Spleen (tissue), 13 donors: ENCODE measurements at regions of chr10 and their contacts with region 1.

Region 1: GRCh38 chr10:103712570-103713498 is 142.5 kb downstream of the SH3PXD2A start:
- DNase-seq: peak; percentile 85
- H3K4me3 ChIP-seq: no peak overlapping the region
- H3K27ac ChIP-seq: no peak overlapping the region
- H3K4me1 ChIP-seq: peaks cover 0 to 12% (median 0%) of the 10 kb centered on the region in 6 donors
- H3K27me3 ChIP-seq: no peaks in the 10 kb centered on the region
- CTCF ChIP-seq: peak; percentile 85 to 96 (median 94)
- POLR2A ChIP-seq: no peak

Region 2: DNA sequence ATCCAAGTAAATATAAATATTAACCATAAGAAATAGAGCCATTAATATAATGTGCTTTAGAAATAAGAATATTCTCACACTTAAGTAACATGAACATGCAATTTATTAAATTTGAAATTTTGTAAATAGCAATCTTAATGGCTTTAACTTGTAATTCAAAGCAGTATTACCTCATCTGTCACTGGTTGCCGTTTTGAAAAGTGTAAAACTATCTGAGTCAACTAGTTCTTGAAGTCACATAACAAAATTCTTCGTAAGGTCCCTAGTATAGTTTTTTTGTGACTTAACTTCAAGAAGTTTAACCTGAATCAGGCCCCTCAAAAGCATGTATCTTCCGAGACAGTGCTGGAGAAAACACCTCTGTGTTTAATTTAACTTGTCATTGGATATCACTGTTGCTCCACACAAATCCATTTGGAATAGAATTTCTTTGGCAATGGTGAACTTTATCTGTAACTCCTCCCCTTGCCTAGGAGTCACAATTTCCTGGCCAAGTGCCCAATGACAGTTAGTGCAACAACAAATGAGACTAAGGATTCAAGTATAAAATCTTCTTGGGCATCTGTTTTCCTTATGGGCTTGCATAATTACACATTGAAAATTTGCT is 566.9 kb before region 1 on chr10:
- intact Hi-C with region 1: no loop called
- DNase-seq: no peak
- H3K4me3 ChIP-seq: no peak overlapping the region
- H3K27ac ChIP-seq: no peak overlapping the region
- H3K4me1 ChIP-seq: peaks cover 0 to 10% (median 0%) of the 10 kb centered on the region in 6 donors
- H3K27me3 ChIP-seq: no peaks in the 10 kb centered on the region
- CTCF ChIP-seq: no peak
- POLR2A ChIP-seq: no peak

Region 3: GRCh38 chr10:103637927-103638557 is 74.8 kb before region 1 on chr10:
- intact Hi-C with region 1: no loop called
- DNase-seq: no peak
- H3K4me3 ChIP-seq: no peak overlapping the region
- H3K27ac ChIP-seq: peak overlapping the region in 7 of 8 donors; percentile 10 to 65 (median 51)
- H3K4me1 ChIP-seq: peaks cover 0 to 59% (median 21%) of the 10 kb centered on the region in 6 donors
- H3K27me3 ChIP-seq: no peaks in the 10 kb centered on the region
- CTCF ChIP-seq: no peak
- POLR2A ChIP-seq: no peak

Region 4: GRCh38 chr10:103859161-103860086 is 146.6 kb after region 1 on chr10:
- intact Hi-C with region 1: loop called (anchors 2 kb)
- DNase-seq: no peak
- H3K4me3 ChIP-seq: no peak overlapping the region
- H3K27ac ChIP-seq: peak overlapping the region in 6 of 8 donors; percentile 68 to 77 (median 72)
- H3K4me1 ChIP-seq: peaks cover 5 to 32% (median 24%) of the 10 kb centered on the region in 6 donors
- H3K27me3 ChIP-seq: peaks cover 0 to 21% (median 13%) of the 10 kb centered on the region in 7 donors
- CTCF ChIP-seq: peak; percentile 41 to 85 (median 73)
- POLR2A ChIP-seq: no peak

Region 5: DNA sequence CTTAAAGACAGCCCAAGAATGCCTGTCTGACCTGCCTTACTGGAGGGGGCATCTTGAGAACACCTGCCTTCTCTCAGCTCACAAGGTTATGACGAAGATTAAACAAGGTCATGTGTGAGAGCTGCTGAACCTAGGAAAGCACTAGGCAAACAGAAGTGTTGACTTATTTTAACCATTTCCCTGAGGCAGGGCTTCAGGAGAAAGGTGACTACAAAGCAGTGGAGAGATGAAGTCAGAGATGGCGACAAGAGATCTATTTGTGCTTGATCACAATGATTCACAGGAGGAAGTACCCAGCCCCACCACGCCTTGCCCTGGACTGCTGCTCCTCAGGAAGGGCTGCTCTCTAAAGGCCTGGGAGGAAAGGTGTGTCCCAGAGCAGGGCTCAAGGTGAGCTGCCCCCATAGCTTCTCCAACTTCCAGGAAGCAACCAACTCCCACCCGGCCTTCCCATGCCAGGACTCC is 177.4 kb after region 1 on chr10:
- intact Hi-C with region 1: no loop called
- DNase-seq: no peak
- H3K4me3 ChIP-seq: no peak overlapping the region
- H3K27ac ChIP-seq: peak overlapping the region in 7 of 8 donors; percentile 31 to 78 (median 64)
- H3K4me1 ChIP-seq: peaks cover 11 to 59% (median 35%) of the 10 kb centered on the region in 6 donors
- H3K27me3 ChIP-seq: no peaks in the 10 kb centered on the region
- CTCF ChIP-seq: no peak
- POLR2A ChIP-seq: no peak